Thyroid gland (tissue), 4 donors: ENCODE measurements at regions of chr5 and their contacts with region 1.

Region 1: GRCh38 chr5:148179234-148179824 is 11.0 kb downstream of the SPINK14 start:
- DNase-seq: no peak
- H3K4me3 ChIP-seq: no peak overlapping the region
- H3K27ac ChIP-seq: no peak overlapping the region
- H3K4me1 ChIP-seq: no peaks in the 10 kb centered on the region
- H3K27me3 ChIP-seq: no peaks in the 10 kb centered on the region
- CTCF ChIP-seq: peak; percentile 26 to 75 (median 58)
- POLR2A ChIP-seq: no peak

Region 2: DNA sequence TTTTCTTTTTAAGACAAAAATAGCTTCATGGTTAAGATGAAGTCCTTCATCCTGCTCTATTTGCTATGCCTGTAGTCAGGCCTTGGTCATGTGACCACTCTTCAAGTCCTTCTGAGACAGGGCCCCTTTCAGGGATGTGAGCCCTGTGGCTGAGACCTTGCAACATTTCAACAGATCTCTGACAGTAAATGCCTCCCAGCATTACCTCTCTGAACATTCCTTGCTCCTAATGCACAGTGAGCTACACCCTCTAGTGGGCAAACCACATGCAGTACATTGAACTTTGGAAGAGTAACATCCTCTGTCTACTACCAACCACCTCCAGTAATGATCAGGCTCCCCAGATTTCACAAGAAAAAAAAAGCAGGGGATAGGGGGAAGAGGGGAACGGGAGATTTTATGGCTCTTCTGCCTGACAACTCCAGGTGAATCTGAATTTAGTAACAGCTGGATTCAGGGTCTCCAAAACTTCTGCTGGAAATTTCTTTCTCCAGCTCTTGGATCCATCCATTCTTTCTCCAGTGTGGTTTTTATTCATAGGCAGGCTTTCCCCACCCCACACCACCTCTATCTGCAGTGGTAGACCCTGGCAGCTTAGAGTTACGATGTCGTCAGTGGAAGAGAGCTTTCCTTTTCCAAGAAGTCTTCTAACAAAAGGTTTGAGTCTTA is 195.5 kb after region 1 on chr5:
- intact Hi-C with region 1: loop called (anchors 10 kb)
- DNase-seq: peak; percentile 22
- H3K4me3 ChIP-seq: no peak overlapping the region
- H3K27ac ChIP-seq: no peak overlapping the region
- H3K4me1 ChIP-seq: no peaks in the 10 kb centered on the region
- H3K27me3 ChIP-seq: no peaks in the 10 kb centered on the region
- CTCF ChIP-seq: peak in 5 of 6 experiments; percentile 20 to 62 (median 54)
- POLR2A ChIP-seq: no peak